ENCODE measurements at regions of chr2 and their contacts with region 1.

Region 1: DNA sequence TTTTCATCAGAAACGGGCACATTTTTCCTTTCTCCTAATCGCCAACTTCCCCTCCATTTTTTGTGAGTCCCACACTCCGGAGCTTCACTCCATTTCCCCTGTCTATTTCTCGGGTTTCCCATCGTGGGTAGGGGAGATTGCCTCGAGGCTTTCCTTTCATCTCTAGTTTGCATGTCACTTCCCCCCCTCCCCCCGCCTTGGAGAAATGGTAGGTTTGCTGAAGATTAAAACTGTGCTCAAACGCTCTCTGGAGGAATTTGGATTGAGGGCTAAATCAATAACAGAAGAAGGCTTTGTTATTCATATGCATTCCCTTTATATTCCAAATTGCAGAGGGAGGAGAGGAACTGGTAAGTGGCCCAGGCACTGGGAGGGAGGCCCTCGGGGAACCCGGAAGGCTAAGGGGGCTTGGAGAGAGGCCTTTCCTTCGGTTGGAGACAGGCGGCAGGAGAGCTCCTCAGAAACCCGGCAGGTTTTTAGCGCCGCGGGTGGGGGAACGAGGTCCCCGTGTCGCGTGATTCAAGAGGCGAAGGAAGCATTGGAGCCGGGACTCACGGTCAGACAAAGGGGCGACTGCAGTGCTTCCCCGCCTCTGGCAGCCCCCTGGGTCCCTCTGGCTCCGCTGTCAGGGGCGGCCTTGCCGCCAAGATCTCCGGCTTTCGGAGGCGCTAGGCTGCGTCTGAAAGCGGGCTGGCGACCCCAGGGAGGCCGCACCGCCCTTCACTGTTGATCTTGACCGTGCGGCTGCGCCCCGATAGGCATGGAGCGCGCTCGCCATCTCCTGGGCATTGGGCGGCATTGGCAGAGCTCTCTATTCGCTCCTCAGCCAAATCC is 2.4 kb upstream of the HOXD12 start:
- DNase-seq: peak; percentile 88
- CTCF ChIP-seq: peak; percentile 93

Region 2: GRCh38 chr2:175690113-175690837 is 406.9 kb before region 1 on chr2:
- in situ Hi-C with region 1: loop called (anchors 25 kb)
- DNase-seq: peak; percentile 28
- CTCF ChIP-seq: peak; percentile 68